ENCODE measurements at regions of chr16 and their contacts with region 1.

Region 1: DNA sequence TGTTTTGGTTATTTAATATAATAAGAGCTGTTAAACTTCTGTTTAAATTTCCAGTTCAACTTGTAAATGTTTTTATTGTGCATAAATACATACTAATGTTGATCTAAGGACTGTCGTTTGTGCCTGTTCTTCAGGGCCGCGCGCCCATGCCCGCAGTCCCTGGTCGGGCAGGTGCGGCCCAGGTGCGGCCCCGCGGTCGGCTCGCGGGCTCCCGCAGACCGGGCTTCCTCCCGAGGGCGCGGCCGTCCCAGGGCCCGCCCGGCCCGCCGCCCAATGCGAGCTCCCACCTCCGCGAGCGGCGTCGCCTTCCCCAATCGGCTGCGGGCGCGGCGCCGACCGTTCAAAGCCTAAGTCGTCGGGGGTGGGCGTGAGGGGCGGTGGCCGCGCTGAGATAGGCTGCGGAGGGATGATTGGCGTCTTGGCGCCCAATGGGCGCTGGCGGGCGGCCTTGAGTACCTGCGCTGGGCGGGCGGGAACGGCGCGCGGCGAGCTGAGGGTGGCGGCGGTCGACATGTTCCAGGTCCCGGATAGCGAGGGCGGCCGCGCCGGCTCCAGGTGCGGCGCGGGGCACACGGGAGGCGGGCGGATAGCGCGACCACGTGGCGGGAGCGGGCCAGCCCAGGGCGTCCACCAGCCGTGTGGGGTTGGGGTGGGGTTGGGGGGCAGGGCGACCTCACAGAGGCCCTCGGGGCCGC is at the start of gene JPT2:
- DNase-seq: peak; percentile 88 to 95
- H3K4me3 ChIP-seq: peak within 1 kb of the TSS; percentile 87 to 99 (median 94)
- H3K27ac ChIP-seq: peak within 1 kb of the TSS; percentile 87
- H3K4me1 ChIP-seq: peaks cover 0 to 10% (median 2%) of the 10 kb centered on the region in 4 experiments; a peak in 4 of 7 replicates
- H3K27me3 ChIP-seq: no peaks in the 10 kb centered on the region
- CTCF ChIP-seq: no peak
- EP300 ChIP-seq: no peak
- POLR2A ChIP-seq: peak in 1 of 2 experiments; percentile 46; a peak in 2 of 3 replicates
- RAD21 ChIP-seq: no peak
- total RNA-seq, gene JPT2: 197 and 199 TPM in 2 replicates

Region 2: GRCh38 chr16:1610276-1611017 is 67.5 kb before region 1 on chr16:
- CTCF ChIA-PET with region 1: no interaction called
- POLR2A ChIA-PET with region 1: interaction called, 11 read pairs
- DNase-seq: peak; percentile 68 to 99
- H3K4me3 ChIP-seq: peak overlapping the region; percentile 64 to 85 (median 74)
- H3K27ac ChIP-seq: peak overlapping the region; percentile 30; the same call in 1 of the 2 replicates
- H3K4me1 ChIP-seq: peaks cover 3 to 13% (median 8%) of the 10 kb centered on the region in 4 experiments; a peak in 5 of 7 replicates
- H3K27me3 ChIP-seq: peaks cover 0 to 10% (median 8%) of the 10 kb centered on the region in 4 experiments; a peak in 5 of 7 replicates
- CTCF ChIP-seq: no peak
- EP300 ChIP-seq: no peak
- POLR2A ChIP-seq: 0 out of 3 replicates have a peak, but pooled peaks of 1 of the 2 experiments have one; percentile 2
- RAD21 ChIP-seq: 0 out of 4 replicates have a peak, but pooled peaks of 1 of the 2 experiments have one; percentile 1

Region 3: GRCh38 chr16:1621851-1622250 is 56.1 kb before region 1 on chr16:
- CTCF ChIA-PET with region 1: no interaction called
- POLR2A ChIA-PET with region 1: no interaction called
- DNase-seq: no peak
- H3K4me3 ChIP-seq: no peak overlapping the region
- H3K27ac ChIP-seq: no peak overlapping the region
- H3K4me1 ChIP-seq: no peaks in the 10 kb centered on the region; a peak in 2 of 7 replicates
- H3K27me3 ChIP-seq: no peaks in the 10 kb centered on the region
- CTCF ChIP-seq: no peak
- EP300 ChIP-seq: no peak
- POLR2A ChIP-seq: no peak
- RAD21 ChIP-seq: no peak